CD4-positive, alpha-beta T cell (primary cell): ENCODE measurements at regions of chr9 and their contacts with region 1.

Region 1: GRCh38 chr9:35696525-35697215 is 6.9 kb upstream of the TPM2 start:
- DNase-seq: peak; percentile 29 to 78 (median 46)
- ATAC-seq: peak; percentile 94
- H3K4me3 ChIP-seq: no peak overlapping the region
- H3K4me3 Mint-ChIP-seq: no peak overlapping the region
- H3K27ac ChIP-seq: no peak overlapping the region
- H3K27ac Mint-ChIP-seq: peak overlapping the region; percentile 24
- H3K4me1 ChIP-seq: peaks cover 10% of the 10 kb centered on the region
- H3K4me1 Mint-ChIP-seq: peaks cover 18% of the 10 kb centered on the region
- H3K27me3 ChIP-seq: no peaks in the 10 kb centered on the region
- H3K27me3 Mint-ChIP-seq: no peaks in the 10 kb centered on the region
- CTCF ChIP-seq: peak; percentile 97

Region 2: DNA sequence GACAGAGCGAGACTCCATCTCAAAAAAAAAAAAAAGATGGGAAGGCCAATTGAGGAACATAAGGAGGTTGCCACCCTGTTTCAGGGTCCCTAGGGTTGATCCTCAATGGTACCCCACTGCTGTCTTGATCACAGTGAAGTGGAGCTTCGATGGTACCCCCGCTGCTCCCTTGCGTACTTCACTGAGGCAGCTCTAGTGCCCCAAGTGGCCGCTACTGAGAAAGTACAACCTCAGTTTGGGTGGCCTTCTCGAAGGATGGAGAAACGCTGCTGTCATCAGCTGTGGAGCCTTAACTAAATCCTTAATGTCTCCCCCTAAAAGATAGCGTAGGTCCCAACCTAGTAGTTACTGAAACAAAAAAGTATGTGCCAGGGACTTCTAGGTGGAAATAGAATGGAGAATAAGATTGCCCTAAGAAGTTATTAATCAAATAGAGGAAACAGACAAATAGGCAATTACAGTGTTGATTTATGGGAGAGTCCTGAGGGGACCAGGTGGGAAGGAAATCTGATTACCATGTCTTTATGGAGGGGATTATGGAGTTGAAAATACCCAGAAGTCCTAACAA is 85.4 kb before region 1 on chr9:
- CTCF ChIA-PET with region 1: interaction called, 15 read pairs
- POLR2A ChIA-PET with region 1: interaction called, 4 read pairs
- intact Hi-C with region 1: loop called in 1 of 2 experiments (anchors 2 kb)
- DNase-seq: peak; percentile 33 to 81 (median 47)
- ATAC-seq: peak; percentile 98
- H3K4me3 ChIP-seq: no peak overlapping the region
- H3K4me3 Mint-ChIP-seq: peak overlapping the region; percentile 5
- H3K27ac ChIP-seq: no peak overlapping the region
- H3K27ac Mint-ChIP-seq: no peak overlapping the region
- H3K4me1 ChIP-seq: peaks cover 26% of the 10 kb centered on the region
- H3K4me1 Mint-ChIP-seq: peaks cover 32% of the 10 kb centered on the region
- H3K27me3 ChIP-seq: no peaks in the 10 kb centered on the region
- H3K27me3 Mint-ChIP-seq: no peaks in the 10 kb centered on the region
- CTCF ChIP-seq: peak; percentile 60

Region 3: GRCh38 chr9:35616681-35617459 is 79.8 kb before region 1 on chr9:
- CTCF ChIA-PET with region 1: interaction called, 5 read pairs
- POLR2A ChIA-PET with region 1: interaction called, 4 read pairs
- intact Hi-C with region 1: loop called in 1 of 2 experiments (anchors 2 kb)
- DNase-seq: peak; percentile 42 to 89 (median 62)
- ATAC-seq: peak; percentile 86
- H3K4me3 ChIP-seq: peak overlapping the region; percentile 77
- H3K4me3 Mint-ChIP-seq: peak overlapping the region; percentile 86
- H3K27ac ChIP-seq: peak overlapping the region; percentile 27 to 70
- H3K27ac Mint-ChIP-seq: peak overlapping the region; percentile 72
- H3K4me1 ChIP-seq: peaks cover 40% of the 10 kb centered on the region
- H3K4me1 Mint-ChIP-seq: peaks cover 50% of the 10 kb centered on the region
- H3K27me3 ChIP-seq: no peaks in the 10 kb centered on the region
- H3K27me3 Mint-ChIP-seq: no peaks in the 10 kb centered on the region
- CTCF ChIP-seq: peak; percentile 47

Region 4: DNA sequence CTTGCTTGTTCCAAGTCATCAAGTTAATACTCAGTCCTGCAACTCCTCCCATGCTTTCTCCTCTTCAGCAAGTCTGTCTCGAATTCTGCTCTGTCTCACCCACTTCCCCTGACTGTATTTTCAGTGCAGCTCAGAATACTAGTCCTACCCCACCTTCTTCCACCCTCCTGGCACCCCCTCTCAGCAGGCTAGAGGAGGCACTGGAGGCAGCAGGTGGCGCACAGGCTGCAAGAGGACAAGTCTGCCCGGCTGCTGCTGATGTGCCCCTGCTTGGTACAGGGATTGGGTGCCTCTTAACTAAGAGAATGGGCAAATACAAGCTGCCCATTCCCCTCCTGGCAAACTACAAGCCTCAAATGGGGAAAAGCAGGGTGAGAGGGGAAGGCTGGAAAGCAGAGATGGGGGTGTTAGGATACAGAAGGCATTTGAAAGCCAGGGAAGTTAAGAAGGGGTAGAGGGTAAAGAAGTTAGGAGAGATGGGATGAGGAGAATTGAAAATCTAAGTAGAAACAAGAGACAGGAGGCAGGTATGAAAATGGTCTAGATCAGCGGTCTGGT is 30.3 kb after region 1 on chr9:
- CTCF ChIA-PET with region 1: interaction called, 26 read pairs
- POLR2A ChIA-PET with region 1: interaction called, 12 read pairs
- intact Hi-C with region 1: loop called in 1 of 2 experiments (anchors 2 kb)
- DNase-seq: peak in 12 of 14 experiments; percentile 21 to 68 (median 45)
- ATAC-seq: peak; percentile 79
- H3K4me3 ChIP-seq: no peak overlapping the region
- H3K4me3 Mint-ChIP-seq: peak overlapping the region; percentile 65
- H3K27ac ChIP-seq: peak overlapping the region in 1 of 2 donors; percentile 40
- H3K27ac Mint-ChIP-seq: no peak overlapping the region
- H3K4me1 ChIP-seq: peaks cover 59% of the 10 kb centered on the region
- H3K4me1 Mint-ChIP-seq: peaks cover 6% of the 10 kb centered on the region
- H3K27me3 ChIP-seq: no peaks in the 10 kb centered on the region
- H3K27me3 Mint-ChIP-seq: no peaks in the 10 kb centered on the region
- CTCF ChIP-seq: peak; percentile 14